Activated naive CD4-positive, alpha-beta T cell treated with anti-CD3 and anti-CD28 coated beads for 36 hours (primary cell): ENCODE measurements at regions of chr5 and their contacts with region 1.

Region 1: GRCh38 chr5:97162045-97162444 is 19.6 kb upstream of the LIX1 start:
- DNase-seq: peak; percentile 76
- H3K4me3 Mint-ChIP-seq: no peak overlapping the region
- H3K27ac Mint-ChIP-seq: no peak overlapping the region
- H3K4me1 Mint-ChIP-seq: peaks cover 17% of the 10 kb centered on the region
- H3K27me3 Mint-ChIP-seq: no peaks in the 10 kb centered on the region

Region 2: GRCh38 chr5:96614110-96614691 is 547.8 kb before region 1 on chr5:
- CTCF ChIA-PET with region 1: interaction called, 5 read pairs
- intact Hi-C with region 1: loop called (anchors 1 kb)
- DNase-seq: peak; percentile 65
- H3K4me3 Mint-ChIP-seq: no peak overlapping the region
- H3K27ac Mint-ChIP-seq: no peak overlapping the region
- H3K4me1 Mint-ChIP-seq: peaks cover 4% of the 10 kb centered on the region
- H3K27me3 Mint-ChIP-seq: peaks cover 5% of the 10 kb centered on the region

Region 3: GRCh38 chr5:96752341-96753016 is 409.6 kb before region 1 on chr5:
- CTCF ChIA-PET with region 1: interaction called, 31 read pairs
- intact Hi-C with region 1: loop called (anchors 1 kb)
- DNase-seq: peak; percentile 54
- H3K4me3 Mint-ChIP-seq: no peak overlapping the region
- H3K27ac Mint-ChIP-seq: peak overlapping the region; percentile 25
- H3K4me1 Mint-ChIP-seq: peaks cover 25% of the 10 kb centered on the region
- H3K27me3 Mint-ChIP-seq: no peaks in the 10 kb centered on the region

Region 4: DNA sequence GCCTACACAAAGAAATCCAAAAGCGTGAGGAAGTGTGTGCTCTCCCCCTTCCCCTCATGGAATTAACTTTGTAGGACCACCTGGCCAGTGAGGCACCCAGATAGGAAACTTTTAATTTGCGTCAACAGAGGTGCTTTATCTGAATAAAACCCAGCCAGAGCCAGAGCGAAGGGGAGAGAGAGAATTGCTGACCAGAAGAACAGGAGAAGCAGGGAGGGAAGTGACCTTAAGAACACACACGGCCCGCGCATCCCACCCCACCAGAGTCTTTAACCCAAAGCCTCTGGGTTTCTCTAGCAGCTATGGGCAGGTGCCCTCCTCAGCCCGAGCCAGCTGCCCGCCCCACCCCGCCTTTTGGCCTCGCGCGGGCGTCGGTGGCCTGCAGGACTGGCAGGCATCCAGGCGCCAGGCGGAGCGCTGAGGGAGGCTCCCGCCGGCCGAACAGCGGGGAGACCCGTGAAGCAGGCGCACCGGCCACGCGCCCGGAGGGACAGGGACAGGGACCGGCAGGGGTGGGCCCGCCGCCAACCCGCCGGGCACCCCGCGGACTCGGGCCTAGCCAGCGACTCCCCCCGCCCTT is 354.9 kb before region 1 on chr5:
- CTCF ChIA-PET with region 1: interaction called, 14 read pairs
- intact Hi-C with region 1: no loop called
- DNase-seq: peak; percentile 48
- H3K4me3 Mint-ChIP-seq: peak overlapping the region; percentile 86
- H3K27ac Mint-ChIP-seq: peak overlapping the region; percentile 97
- H3K4me1 Mint-ChIP-seq: peaks cover 80% of the 10 kb centered on the region
- H3K27me3 Mint-ChIP-seq: no peaks in the 10 kb centered on the region

Region 5: DNA sequence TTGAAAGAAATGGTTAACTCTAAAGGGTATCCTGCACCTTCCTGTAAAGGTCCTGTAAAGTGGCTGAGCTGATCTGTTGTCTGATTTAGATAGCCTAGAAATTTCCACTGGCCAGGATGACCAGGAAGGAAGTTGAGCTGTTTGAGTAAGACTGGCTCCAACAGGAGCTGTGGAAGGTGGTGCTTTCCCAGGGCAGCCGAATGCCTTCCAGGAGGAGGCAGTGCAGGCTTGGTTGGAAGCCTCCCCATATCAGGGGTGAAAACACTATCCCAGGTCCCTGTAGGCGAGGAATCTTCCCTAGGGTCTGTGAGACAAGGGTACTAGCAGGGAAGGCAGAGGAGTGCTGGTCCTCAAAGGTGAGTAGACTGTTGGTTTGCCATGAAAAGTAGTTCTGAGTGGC is 118.0 kb before region 1 on chr5:
- CTCF ChIA-PET with region 1: interaction called, 5 read pairs
- intact Hi-C with region 1: loop called (anchors 1 kb)
- DNase-seq: no peak
- H3K4me3 Mint-ChIP-seq: no peak overlapping the region
- H3K27ac Mint-ChIP-seq: no peak overlapping the region
- H3K4me1 Mint-ChIP-seq: no peaks in the 10 kb centered on the region
- H3K27me3 Mint-ChIP-seq: no peaks in the 10 kb centered on the region

Region 6: DNA sequence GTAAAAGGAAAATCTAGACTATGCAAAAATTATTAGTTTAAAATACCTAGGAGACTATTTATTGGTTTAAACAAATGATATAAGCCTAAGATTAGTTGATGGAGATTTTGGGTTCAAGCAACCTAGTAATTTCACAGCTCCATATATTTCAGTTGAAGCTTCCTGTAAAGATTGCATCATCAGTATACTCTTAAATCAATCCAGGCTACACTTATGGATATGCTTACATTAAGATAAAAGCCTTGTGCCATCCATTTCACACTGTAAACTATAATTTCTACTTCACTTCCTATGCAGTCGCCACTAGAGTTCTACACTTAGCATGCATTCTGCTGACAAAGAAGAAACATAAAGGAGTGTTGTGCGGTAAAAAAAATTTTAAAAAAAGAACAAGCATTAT is 12.3 kb before region 1 on chr5:
- CTCF ChIA-PET with region 1: interaction called, 30 read pairs
- intact Hi-C with region 1: no loop called
- DNase-seq: no peak
- H3K4me3 Mint-ChIP-seq: no peak overlapping the region
- H3K27ac Mint-ChIP-seq: no peak overlapping the region
- H3K4me1 Mint-ChIP-seq: no peaks in the 10 kb centered on the region
- H3K27me3 Mint-ChIP-seq: no peaks in the 10 kb centered on the region